Heart right ventricle (tissue), 16 donors: ENCODE measurements at regions of chr20 and their contacts with region 1.

Region 1: DNA sequence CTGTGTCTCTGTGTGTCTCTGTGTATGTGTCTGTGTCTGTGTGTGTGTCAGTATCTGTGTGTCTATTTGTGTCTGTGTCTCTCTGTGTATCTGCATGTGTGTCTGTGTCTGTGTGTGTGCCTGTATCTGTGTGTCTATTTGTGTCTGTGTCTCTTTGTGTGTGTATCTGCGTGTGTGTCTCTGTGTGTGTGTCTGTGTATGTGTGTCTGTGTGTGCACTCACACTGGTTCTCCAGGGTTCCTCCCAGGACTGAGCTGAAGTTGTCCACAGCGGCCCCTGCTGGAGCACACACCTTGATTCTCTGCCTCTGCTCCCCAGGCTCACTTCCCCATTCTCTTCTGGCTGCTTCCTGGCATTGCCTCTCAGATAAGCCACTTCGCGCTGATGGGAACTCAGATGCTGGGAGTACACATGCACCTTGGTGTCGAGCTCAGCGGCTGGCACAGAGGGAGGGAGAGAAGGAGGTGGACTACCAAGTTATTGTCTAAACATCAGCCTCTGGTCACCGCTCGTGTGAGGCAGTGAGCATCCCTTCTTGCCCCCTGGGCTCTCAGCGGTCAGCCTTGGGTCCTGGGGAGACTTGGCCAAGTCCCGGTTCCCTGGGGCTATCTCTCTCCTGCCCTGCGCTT is 104.9 kb upstream of the NXT1 start:
- DNase-seq: peak; percentile 70 to 73
- ATAC-seq: peak; percentile 64 to 85 (median 79)
- H3K4me3 ChIP-seq: no peak overlapping the region
- H3K27ac ChIP-seq: peak overlapping the region in 7 of 10 donors; percentile 39 to 77 (median 70)
- H3K4me1 ChIP-seq: peaks cover 0 to 31% (median 22%) of the 10 kb centered on the region in 9 donors
- H3K27me3 ChIP-seq: peaks cover 0 to 13% (median 0%) of the 10 kb centered on the region in 7 donors
- CTCF ChIP-seq: peak; percentile 20 to 70 (median 63)

Region 2: GRCh38 chr20:23187751-23188150 is 57.9 kb before region 1 on chr20:
- intact Hi-C with region 1: loop called in 1 of 10 experiments (anchors 10 kb)
- DNase-seq: peak; percentile 36 to 44
- ATAC-seq: peak; percentile 67 to 97 (median 88)
- H3K4me3 ChIP-seq: no peak overlapping the region
- H3K27ac ChIP-seq: no peak overlapping the region
- H3K4me1 ChIP-seq: peaks cover 0 to 4% (median 0%) of the 10 kb centered on the region in 9 donors
- H3K27me3 ChIP-seq: no peaks in the 10 kb centered on the region
- CTCF ChIP-seq: peak in 1 of 9 donors; percentile 3

Region 3: GRCh38 chr20:23270382-23270911 is 24.8 kb after region 1 on chr20:
- intact Hi-C with region 1: no loop called
- DNase-seq: no peak
- ATAC-seq: peak in 7 of 8 donors; percentile 40 to 70 (median 54)
- H3K4me3 ChIP-seq: no peak overlapping the region
- H3K27ac ChIP-seq: peak overlapping the region; percentile 51 to 92 (median 76)
- H3K4me1 ChIP-seq: peaks cover 5 to 33% (median 15%) of the 10 kb centered on the region in 9 donors
- H3K27me3 ChIP-seq: no peaks in the 10 kb centered on the region
- CTCF ChIP-seq: no peak

Region 4: DNA sequence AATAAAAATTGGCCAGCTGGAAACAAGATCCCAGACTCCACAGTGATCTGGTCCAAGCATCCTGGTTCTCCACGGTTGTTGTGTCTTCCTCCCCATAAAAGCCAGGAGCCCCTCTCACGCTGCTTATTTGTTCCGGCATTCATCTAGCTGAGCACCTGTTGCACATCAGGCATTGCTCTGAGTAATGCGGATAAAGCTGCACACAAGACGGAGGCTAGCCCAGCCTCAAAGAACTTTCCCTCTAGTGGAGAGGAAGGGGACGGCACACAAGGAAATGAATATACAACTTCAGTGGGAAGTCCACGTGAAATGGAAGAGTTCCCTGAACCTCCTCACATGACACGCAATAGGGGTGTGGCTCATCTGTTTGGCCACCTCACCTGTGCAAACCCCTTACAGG is 74.7 kb after region 1 on chr20:
- intact Hi-C with region 1: loop called in 2 of 10 experiments (anchors 10 kb)
- DNase-seq: no peak
- ATAC-seq: no peak
- H3K4me3 ChIP-seq: no peak overlapping the region
- H3K27ac ChIP-seq: no peak overlapping the region
- H3K4me1 ChIP-seq: peaks cover 0 to 9% (median 0%) of the 10 kb centered on the region in 9 donors
- H3K27me3 ChIP-seq: peaks cover 0 to 8% (median 0%) of the 10 kb centered on the region in 7 donors
- CTCF ChIP-seq: peak in 8 of 9 donors; percentile 10 to 44 (median 28)

Region 5: GRCh38 chr20:23340524-23340923 is 94.9 kb after region 1 on chr20:
- intact Hi-C with region 1: loop called in 6 of 10 experiments (anchors 5 to 10 kb)
- DNase-seq: peak; percentile 41 to 80
- ATAC-seq: peak; percentile 68 to 92 (median 88)
- H3K4me3 ChIP-seq: no peak overlapping the region
- H3K27ac ChIP-seq: no peak overlapping the region
- H3K4me1 ChIP-seq: peaks cover 0 to 10% (median 0%) of the 10 kb centered on the region in 9 donors
- H3K27me3 ChIP-seq: no peaks in the 10 kb centered on the region
- CTCF ChIP-seq: peak; percentile 55 to 89 (median 75)